MCF 10A (cell line): ENCODE measurements at regions of chr21 and their contacts with region 1.

Region 1: GRCh38 chr21:33924079-33924765 is 8.6 kb upstream of the ATP5PO start:
- DNase-seq: peak; percentile 89
- H3K4me3 Mint-ChIP-seq: no peak overlapping the region
- H3K27ac Mint-ChIP-seq: peak overlapping the region; percentile 53
- H3K4me1 Mint-ChIP-seq: peaks cover 6% of the 10 kb centered on the region
- H3K27me3 Mint-ChIP-seq: no peaks in the 10 kb centered on the region
- CTCF ChIP-seq: peak; percentile 87

Region 2: GRCh38 chr21:33751120-33751519 is 173.1 kb before region 1 on chr21:
- CTCF ChIA-PET with region 1: no interaction called
- POLR2A ChIA-PET with region 1: no interaction called
- intact Hi-C with region 1: no loop called
- DNase-seq: no peak
- H3K4me3 Mint-ChIP-seq: no peak overlapping the region
- H3K27ac Mint-ChIP-seq: no peak overlapping the region
- H3K4me1 Mint-ChIP-seq: no peaks in the 10 kb centered on the region
- H3K27me3 Mint-ChIP-seq: no peaks in the 10 kb centered on the region
- CTCF ChIP-seq: no peak

Region 3: DNA sequence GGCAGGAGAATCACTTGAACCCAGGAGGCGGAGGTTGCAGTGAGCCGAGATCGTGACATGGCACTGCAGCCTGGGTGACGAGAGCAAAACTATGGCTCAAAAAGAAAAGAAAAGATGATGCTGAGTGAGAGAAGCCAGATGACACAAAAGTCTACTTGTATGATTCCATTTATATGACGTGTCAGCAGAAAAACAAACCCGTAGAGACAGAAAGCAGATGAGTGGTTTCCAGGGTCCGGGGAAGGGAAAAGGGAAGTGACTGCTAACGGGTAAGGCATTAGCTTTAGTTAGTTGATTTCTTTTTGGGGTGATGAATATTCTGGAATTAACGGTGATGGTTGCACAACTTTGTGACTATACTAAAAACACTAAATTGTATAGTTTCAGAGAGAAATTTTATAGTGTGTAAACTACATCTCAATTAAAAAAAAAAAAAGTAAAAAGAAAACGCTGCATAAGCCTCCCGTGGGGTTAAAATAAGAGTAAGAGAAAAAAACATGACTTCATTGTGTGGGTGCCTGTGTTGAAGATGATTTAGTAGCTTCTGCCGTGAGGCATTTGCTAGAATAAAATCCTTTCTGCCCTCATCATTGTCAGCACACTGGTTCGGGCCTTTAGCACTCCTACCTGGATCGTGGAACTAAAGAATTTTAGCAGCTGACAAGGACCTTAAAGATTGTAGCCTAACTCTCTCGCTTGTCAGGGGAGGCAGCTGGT is 16.1 kb after region 1 on chr21:
- CTCF ChIA-PET with region 1: interaction called, 42 read pairs
- POLR2A ChIA-PET with region 1: interaction called, 5 read pairs
- intact Hi-C with region 1: no loop called
- DNase-seq: no peak
- H3K4me3 Mint-ChIP-seq: no peak overlapping the region
- H3K27ac Mint-ChIP-seq: no peak overlapping the region
- H3K4me1 Mint-ChIP-seq: peaks cover 11% of the 10 kb centered on the region
- H3K27me3 Mint-ChIP-seq: no peaks in the 10 kb centered on the region
- CTCF ChIP-seq: no peak

Region 4: DNA sequence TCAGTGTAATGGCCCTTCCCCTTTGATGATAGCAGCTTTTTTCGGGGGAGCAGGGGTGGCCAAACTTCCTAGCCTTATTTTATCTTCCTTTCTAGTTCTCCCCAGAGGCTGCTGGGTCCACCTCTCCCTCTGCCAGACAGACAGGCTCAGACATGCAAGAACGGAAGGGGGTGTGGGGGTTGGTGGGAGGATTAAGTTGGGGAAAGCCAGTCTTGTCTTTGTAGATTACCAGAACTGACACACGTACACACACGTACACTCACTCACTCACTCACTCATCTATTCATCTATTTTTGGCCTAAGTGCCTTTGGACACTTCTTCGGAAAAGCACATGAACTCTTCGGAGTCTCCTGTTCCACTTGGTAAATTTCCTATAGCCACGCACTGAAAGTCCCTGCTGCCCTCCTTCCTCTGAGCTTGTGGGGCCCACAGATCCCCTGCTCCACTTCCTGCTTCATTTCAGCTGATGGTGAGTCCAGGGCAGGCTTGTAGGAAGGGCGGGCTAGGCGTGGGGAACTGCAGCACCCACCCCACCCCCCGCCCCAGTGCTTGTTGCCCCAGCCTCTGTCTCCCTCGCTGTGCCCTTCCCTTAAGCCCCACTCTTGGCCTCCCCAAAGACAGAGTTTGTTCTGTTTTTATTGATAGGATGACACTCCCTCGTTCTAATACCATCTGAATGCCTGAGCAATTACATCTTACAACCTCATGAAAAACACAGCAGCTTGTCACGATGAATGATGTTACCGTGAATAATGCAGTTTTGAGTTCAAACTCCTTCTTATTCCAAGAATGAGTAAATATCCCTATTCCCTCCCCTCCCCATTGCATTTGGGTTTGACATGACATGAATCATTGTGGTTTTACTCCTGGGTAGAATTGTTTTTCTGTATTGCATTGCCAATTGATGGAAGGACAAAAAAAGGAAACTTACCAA is 52.1 kb after region 1 on chr21:
- CTCF ChIA-PET with region 1: interaction called, 17 read pairs
- POLR2A ChIA-PET with region 1: no interaction called
- intact Hi-C with region 1: loop called (anchors 2 kb)
- DNase-seq: peak; percentile 92
- H3K4me3 Mint-ChIP-seq: peak overlapping the region; percentile 60
- H3K27ac Mint-ChIP-seq: peak overlapping the region; percentile 98
- H3K4me1 Mint-ChIP-seq: peaks cover 41% of the 10 kb centered on the region
- H3K27me3 Mint-ChIP-seq: no peaks in the 10 kb centered on the region
- CTCF ChIP-seq: no peak

Region 5: GRCh38 chr21:34133802-34134201 is 209.6 kb after region 1 on chr21:
- CTCF ChIA-PET with region 1: interaction called, 13 read pairs
- POLR2A ChIA-PET with region 1: no interaction called
- intact Hi-C with region 1: no loop called
- DNase-seq: no peak
- H3K4me3 Mint-ChIP-seq: no peak overlapping the region
- H3K27ac Mint-ChIP-seq: no peak overlapping the region
- H3K4me1 Mint-ChIP-seq: peaks cover 19% of the 10 kb centered on the region
- H3K27me3 Mint-ChIP-seq: no peaks in the 10 kb centered on the region
- CTCF ChIP-seq: peak; percentile 21

Region 6: DNA sequence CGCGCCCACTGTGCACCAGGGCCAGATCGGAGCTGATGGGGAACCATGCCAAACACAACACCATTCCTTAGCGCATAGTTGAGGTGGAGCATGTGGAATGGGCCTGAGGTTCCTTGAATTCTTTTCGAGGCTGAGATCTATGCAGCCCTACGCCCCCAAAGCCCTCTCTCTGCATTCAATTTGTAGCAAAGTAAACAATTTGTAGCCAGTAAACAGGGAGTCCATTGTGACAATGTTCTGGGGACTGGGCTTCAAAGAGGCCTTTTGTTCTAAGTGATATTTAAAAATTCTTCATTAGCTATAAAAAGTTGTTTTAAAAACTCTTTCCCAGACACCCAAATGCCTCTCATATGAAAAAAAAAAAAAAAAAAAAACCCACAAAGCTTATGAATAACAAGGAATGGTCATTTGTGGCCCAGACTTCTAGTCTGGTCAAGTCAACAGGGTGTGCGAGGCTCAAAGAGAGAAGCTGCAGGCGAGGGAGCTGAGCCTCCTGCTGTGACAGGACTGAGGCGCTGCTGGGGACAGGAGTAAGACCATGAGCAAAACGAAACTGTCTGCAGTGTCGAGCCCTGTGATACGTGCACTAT is 409.0 kb after region 1 on chr21:
- CTCF ChIA-PET with region 1: interaction called, 13 read pairs
- POLR2A ChIA-PET with region 1: interaction called, 3 read pairs
- intact Hi-C with region 1: no loop called
- DNase-seq: no peak
- H3K4me3 Mint-ChIP-seq: no peak overlapping the region
- H3K27ac Mint-ChIP-seq: no peak overlapping the region
- H3K4me1 Mint-ChIP-seq: no peaks in the 10 kb centered on the region
- H3K27me3 Mint-ChIP-seq: peaks cover 2% of the 10 kb centered on the region
- CTCF ChIP-seq: no peak

Region 7: DNA sequence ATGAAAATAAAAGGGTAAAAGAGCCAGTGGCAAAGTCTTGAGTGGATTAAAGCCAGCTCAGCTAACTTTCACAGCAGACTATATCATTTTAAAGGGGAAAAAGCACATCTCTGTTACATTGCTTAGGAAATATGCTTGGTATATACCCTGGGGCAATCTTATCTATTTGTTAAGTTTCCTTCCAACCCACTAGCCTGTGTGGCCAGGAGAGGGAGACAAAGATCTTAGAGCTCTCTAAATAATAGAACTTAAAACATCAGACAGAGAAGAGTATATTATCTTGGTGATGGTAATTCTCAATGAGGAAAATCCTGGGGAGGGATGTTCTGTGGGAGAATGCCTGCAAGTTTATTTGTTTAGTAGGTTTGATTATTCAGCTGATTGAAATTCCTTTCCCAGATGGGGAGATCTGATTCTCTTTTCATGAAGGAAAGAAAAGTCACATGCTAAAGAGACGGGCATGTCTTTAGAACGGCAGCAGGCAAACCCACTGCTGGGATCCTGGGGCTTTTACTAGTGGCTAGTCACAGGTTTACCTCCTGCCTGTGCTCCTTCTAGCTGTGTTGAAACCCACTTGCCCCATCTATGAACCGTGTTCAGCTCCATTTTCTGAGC is 443.2 kb after region 1 on chr21:
- CTCF ChIA-PET with region 1: interaction called, 17 read pairs
- POLR2A ChIA-PET with region 1: no interaction called
- intact Hi-C with region 1: no loop called
- DNase-seq: peak; percentile 83
- H3K4me3 Mint-ChIP-seq: no peak overlapping the region
- H3K27ac Mint-ChIP-seq: no peak overlapping the region
- H3K4me1 Mint-ChIP-seq: no peaks in the 10 kb centered on the region
- H3K27me3 Mint-ChIP-seq: peaks cover 11% of the 10 kb centered on the region
- CTCF ChIP-seq: peak; percentile 59